Right cardiac atrium (tissue), 5 donors: ENCODE measurements at regions of chr1 and their contacts with region 1.

Region 1: DNA sequence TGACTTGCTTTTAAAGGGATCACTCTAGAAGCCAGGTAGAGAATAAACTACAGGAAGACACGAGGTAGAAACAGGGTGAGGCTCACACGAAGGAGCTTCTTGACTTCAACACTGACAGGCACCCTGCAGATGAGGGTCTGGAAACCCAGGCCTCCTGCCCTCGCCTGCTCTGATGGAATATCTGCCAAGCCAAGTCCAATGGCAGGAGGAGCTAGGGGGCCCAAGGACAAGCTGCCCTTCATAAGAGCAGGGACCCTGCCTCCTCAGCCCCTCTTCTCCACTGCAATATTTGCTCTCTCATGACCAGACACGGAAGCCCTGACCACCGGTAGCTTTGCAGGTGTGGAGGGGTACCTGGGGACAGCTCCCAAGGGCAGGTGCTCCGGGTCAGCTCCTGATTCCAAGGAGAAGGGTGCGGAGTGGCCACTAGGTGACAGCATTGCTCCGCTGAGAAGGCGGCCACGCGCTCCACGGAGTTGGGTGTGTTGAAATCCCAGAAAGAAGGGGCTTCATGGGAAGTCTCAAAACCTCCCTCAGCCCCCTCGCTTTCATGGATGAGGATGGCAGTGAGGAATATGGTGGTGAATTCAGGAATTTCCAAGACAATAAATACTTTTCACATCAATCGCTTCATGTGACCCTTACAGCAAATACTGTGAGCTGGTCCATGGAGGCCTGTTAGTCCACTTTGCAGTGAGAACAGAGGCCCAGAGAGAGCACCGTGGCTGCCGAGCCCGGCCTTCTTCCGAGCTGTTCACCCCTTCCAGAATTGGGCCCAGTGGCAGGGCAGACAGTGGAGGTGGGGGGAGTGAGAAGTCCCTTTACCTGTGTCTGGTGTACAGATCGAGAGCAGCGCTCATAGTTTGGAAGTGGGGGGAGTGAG is 33.2 kb upstream of the PAX7 start:
- DNase-seq: peak; percentile 52 to 78 (median 75)
- ATAC-seq: peak; percentile 78 to 83
- H3K4me3 ChIP-seq: no peak overlapping the region
- H3K27ac ChIP-seq: no peak overlapping the region
- H3K4me1 ChIP-seq: no peaks in the 10 kb centered on the region
- H3K27me3 ChIP-seq: no peaks in the 10 kb centered on the region

Region 2: DNA sequence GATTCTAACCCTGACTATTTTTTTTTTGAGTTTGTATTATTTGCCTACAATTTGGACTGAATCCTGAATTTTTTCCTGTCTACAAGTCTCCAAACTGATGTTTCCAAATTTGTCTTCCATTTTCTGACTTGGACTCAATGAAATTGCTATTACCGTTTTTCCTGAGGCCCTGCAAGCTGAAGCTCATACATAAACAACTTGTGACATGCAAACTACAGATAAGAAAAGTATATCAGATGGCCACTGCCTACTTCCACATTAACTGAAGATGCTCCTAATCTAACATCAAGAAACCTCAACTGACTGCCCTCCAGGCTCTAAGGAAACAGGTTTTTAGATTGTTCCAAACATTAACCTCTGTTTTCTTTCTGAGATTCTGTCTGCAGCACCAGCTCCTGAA is 167.7 kb before region 1 on chr1:
- intact Hi-C with region 1: no loop called
- DNase-seq: no peak
- ATAC-seq: no peak
- H3K4me3 ChIP-seq: no peak overlapping the region
- H3K27ac ChIP-seq: no peak overlapping the region
- H3K4me1 ChIP-seq: no peaks in the 10 kb centered on the region
- H3K27me3 ChIP-seq: no peaks in the 10 kb centered on the region

Region 3: GRCh38 chr1:18569811-18570545 is 27.4 kb before region 1 on chr1:
- intact Hi-C with region 1: no loop called
- DNase-seq: no peak
- ATAC-seq: no peak
- H3K4me3 ChIP-seq: no peak overlapping the region
- H3K27ac ChIP-seq: no peak overlapping the region
- H3K4me1 ChIP-seq: no peaks in the 10 kb centered on the region
- H3K27me3 ChIP-seq: no peaks in the 10 kb centered on the region

Region 4: GRCh38 chr1:18668796-18669404 is 71.5 kb after region 1 on chr1:
- intact Hi-C with region 1: no loop called
- DNase-seq: no peak
- ATAC-seq: no peak
- H3K4me3 ChIP-seq: no peak overlapping the region
- H3K27ac ChIP-seq: no peak overlapping the region
- H3K4me1 ChIP-seq: no peaks in the 10 kb centered on the region
- H3K27me3 ChIP-seq: no peaks in the 10 kb centered on the region

Region 5: GRCh38 chr1:18820791-18821641 is 223.6 kb after region 1 on chr1:
- intact Hi-C with region 1: loop called (anchors 1 to 5 kb)
- DNase-seq: peak; percentile 78 to 93 (median 89)
- ATAC-seq: peak; percentile 63 to 84
- H3K4me3 ChIP-seq: no peak overlapping the region
- H3K27ac ChIP-seq: no peak overlapping the region
- H3K4me1 ChIP-seq: no peaks in the 10 kb centered on the region
- H3K27me3 ChIP-seq: no peaks in the 10 kb centered on the region

Region 6: GRCh38 chr1:18875107-18875795 is 277.9 kb after region 1 on chr1:
- intact Hi-C with region 1: loop called in 3 of 4 experiments (anchors 5 to 10 kb)
- DNase-seq: peak; percentile 81 to 93 (median 90)
- ATAC-seq: peak; percentile 53 to 78
- H3K4me3 ChIP-seq: no peak overlapping the region
- H3K27ac ChIP-seq: no peak overlapping the region
- H3K4me1 ChIP-seq: no peaks in the 10 kb centered on the region
- H3K27me3 ChIP-seq: no peaks in the 10 kb centered on the region

Region 7: DNA sequence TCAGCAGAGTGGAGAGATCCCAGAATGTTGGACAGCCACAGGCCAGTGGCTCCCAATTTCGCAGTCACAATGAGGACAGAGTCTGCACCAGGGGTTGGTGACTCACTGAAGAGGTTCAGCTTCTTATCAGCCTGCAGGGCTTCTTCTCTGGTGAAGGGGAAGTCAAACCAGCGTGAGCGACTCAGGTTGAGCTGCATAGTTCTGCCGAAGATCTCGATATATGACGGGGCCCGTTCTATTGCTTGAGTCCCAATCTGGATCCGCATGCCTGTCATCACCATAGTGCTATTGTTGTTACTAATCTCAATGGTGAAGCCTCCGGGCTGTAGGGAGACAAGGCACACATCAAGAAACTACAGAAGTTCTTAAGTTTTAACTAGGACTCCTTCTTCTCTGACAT is 554.1 kb after region 1 on chr1:
- intact Hi-C with region 1: no loop called
- DNase-seq: no peak
- ATAC-seq: no peak
- H3K4me3 ChIP-seq: no peak overlapping the region
- H3K27ac ChIP-seq: no peak overlapping the region
- H3K4me1 ChIP-seq: no peaks in the 10 kb centered on the region
- H3K27me3 ChIP-seq: no peaks in the 10 kb centered on the region